Vagina (tissue), 2 donors: ENCODE measurements at regions of chr9 and their contacts with region 1.

Region 1: DNA sequence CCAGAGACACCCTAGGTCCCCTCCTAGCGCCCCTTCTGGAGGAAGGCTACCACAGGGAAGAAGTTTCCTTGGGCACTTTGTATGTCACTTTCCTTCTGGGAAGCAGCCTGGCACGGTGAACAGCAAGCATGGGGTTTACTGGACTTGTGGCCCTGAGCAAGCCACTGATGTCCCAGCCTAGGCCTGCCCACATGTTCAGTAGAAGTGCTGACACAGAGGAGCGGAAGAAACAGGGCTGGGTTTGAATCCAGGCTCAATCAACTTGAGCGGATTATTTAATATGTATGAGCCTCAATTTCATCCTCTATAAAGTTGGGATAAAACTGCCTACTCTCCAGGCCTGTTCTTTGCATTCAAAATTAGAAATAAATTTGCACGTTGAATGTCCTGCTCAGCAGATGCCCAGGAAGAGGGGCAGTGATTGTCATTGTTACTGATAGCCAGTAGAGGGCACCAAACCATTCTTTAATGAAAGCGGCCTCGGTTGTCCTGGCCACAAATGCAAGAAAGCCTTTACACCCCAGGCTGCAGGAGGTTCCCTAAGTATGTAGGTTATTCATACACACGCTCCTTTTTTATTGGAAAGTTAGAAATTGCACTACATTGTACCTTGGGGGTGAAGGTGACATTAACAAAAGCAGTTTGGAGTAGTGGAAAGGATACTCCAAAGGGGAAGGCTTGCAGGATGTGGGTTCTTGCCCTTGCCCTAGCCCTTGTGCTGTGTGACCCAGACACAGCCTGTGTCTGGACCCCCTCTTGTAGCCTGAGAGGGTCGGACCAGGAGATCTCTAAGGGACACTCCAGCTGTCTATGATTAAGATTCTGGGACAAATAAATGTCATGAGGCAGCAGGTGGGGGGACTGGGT is 13.4 kb upstream of the XPA start:
- DNase-seq: no peak
- H3K4me3 ChIP-seq: no peak overlapping the region
- H3K27ac ChIP-seq: no peak overlapping the region
- H3K4me1 ChIP-seq: peaks cover 4% of the 10 kb centered on the region
- H3K27me3 ChIP-seq: no peaks in the 10 kb centered on the region
- CTCF ChIP-seq: peak; percentile 71 to 78 (median 71)
- POLR2A ChIP-seq: no peak

Region 2: DNA sequence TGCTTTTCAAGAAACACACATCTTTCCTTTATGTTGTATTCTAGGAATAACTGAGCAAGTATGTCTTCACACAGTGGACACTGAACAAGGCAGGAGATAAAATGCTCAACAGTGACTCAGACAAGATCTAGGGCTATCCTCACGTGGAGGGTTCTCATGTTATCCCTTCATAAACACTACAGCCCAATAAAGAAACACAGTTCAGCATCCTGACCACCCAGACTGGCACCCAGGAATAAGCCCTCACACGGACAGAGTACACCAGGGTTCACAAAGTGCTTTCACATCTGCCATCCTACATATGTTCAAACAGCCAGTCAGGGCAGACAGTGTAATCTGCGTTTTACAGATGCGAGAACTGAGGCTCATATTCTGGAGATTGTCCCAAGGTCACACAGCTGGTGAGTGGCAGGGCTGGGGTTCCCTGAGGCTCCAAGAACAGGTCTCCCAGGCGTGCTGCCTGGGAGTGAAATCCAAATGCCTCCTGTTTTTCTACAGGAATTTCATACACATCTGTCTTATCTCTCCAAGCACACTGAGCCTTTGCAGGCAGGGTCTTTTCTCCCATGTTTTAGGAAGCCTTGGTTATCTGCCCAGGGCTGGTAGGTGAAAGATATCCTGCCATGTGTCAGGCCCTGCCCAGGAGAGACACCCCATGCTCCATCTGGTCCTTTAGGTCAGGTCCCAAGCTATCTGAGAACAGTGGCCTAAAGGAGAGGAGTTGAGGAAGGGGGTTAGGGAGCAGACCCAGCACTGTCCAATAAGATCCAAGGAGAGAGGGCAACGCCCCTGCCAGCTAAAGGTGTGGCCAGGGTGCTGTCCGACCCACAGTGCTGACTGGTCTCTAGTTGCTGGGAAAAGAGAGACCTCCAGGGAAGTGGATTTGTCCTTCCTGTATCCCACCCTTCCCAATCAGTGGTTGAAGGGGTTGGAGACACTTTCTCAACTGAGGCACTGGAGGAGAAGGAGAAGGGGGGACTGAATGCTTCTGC is 34.4 kb after region 1 on chr9:
- intact Hi-C with region 1: no loop called
- DNase-seq: no peak
- H3K4me3 ChIP-seq: no peak overlapping the region
- H3K27ac ChIP-seq: no peak overlapping the region
- H3K4me1 ChIP-seq: peaks cover 16% of the 10 kb centered on the region
- H3K27me3 ChIP-seq: no peaks in the 10 kb centered on the region
- CTCF ChIP-seq: no peak
- POLR2A ChIP-seq: no peak

Region 3: DNA sequence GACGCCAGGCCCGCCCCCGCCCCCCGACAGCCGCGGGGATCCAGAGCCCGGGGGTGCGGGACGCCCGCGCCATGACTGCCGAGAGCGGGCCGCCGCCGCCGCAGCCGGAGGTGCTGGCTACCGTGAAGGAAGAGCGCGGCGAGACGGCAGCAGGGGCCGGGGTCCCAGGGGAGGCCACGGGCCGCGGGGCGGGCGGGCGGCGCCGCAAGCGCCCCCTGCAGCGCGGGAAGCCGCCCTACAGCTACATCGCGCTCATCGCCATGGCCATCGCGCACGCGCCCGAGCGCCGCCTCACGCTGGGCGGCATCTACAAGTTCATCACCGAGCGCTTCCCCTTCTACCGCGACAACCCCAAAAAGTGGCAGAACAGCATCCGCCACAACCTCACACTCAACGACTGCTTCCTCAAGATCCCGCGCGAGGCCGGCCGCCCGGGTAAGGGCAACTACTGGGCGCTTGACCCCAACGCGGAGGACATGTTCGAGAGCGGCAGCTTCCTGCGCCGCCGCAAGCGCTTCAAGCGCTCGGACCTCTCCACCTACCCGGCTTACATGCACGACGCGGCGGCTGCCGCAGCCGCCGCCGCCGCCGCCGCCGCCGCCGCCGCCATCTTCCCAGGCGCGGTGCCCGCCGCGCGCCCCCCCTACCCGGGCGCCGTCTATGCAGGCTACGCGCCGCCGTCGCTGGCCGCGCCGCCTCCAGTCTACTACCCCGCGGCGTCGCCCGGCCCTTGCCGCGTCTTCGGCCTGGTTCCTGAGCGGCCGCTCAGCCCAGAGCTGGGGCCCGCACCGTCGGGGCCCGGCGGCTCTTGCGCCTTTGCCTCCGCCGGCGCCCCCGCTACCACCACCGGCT is 143.5 kb after region 1 on chr9:
- intact Hi-C with region 1: no loop called
- DNase-seq: peak in 1 of 2 donors; percentile 77
- H3K4me3 ChIP-seq: peak overlapping the region; percentile 46 to 49
- H3K27ac ChIP-seq: peak overlapping the region; percentile 77
- H3K4me1 ChIP-seq: peaks cover 41% of the 10 kb centered on the region
- H3K27me3 ChIP-seq: peaks cover 12% of the 10 kb centered on the region
- CTCF ChIP-seq: no peak
- POLR2A ChIP-seq: no peak

Region 4: DNA sequence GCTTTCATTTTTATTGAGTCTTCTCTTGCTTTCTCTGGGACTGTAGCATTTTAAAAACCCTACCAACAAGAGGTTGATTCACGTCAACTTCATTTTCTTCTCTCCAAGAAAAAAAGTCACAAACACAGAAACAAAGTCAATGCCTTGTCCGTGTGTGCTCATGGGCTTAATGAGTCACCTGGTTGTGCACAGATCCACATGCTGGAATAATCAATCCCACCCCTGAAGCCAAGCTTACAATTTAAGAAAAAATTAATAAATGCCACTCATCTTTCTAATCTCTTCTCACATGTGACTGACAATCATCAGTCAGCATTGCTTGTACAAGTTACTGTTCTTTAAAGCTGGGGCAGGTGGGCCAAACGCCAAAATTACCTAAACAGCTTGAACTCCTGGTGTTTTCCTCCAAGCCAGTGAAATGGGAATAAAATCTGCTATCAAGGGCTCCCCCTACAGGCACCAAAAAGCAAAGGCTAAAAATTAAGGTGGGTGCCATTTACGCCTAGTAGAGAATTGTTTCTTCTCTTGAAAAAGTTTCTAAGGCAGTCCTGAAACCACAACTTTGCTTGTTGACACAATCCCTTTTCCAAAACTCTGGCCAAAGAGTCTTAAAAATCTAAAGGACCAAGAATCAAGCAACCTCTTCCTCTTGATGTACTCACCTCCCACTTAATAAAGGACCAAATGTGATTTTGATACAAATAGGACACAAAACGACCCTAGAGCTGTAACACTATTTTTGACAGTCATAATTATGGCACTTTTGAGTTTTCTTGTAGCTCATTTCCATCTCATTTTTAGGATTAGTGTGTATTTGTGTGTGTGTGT is 190.4 kb after region 1 on chr9:
- intact Hi-C with region 1: loop called (anchors 5 kb)
- DNase-seq: no peak
- H3K4me3 ChIP-seq: no peak overlapping the region
- H3K27ac ChIP-seq: no peak overlapping the region
- H3K4me1 ChIP-seq: peaks cover 11% of the 10 kb centered on the region
- H3K27me3 ChIP-seq: no peaks in the 10 kb centered on the region
- CTCF ChIP-seq: peak; percentile 28 to 61 (median 43)
- POLR2A ChIP-seq: no peak